Heart left ventricle (tissue), 16 donors: ENCODE measurements at regions of chr18 and their contacts with region 1.

Region 1: DNA sequence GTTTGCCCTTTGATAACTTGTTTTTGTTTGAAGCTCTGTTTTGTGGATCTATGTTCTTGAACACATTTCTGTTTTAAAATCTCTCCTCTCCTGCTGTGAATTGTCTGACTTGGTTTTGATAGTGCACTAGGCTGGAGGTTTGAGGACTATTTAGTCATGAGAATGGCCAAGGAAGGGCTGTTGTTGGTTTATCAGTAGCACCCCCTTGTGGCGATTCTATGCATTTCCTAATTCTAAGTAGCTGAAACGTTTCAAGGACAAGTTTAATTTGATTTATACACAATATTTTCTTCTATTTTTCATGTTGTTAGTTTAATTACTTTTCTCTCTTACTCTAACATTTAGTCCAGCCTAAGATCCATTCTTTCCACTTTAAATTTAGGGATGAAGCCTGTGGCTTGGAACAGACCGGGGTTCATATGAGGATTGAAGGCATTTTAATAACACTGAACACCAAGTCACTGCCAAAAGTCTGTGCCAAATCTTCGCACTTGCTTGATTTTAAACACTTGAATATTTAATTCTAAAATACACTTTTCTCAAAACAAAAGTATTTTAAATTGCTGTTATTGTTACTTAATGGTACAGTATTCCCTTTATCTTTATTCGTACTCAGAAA is 166.0 kb downstream of the SOCS6 start:
- DNase-seq: peak in 1 of 5 donors; percentile 16
- ATAC-seq: peak in 1 of 4 donors; percentile 44
- H3K4me3 ChIP-seq: no peak overlapping the region
- H3K27ac ChIP-seq: no peak overlapping the region
- H3K4me1 ChIP-seq: peaks cover 0 to 4% (median 0%) of the 10 kb centered on the region in 12 donors
- H3K27me3 ChIP-seq: peaks cover 0 to 6% (median 0%) of the 10 kb centered on the region in 9 donors
- CTCF ChIP-seq: peak; percentile 67 to 89 (median 78)
- POLR2A ChIP-seq: no peak

Region 2: DNA sequence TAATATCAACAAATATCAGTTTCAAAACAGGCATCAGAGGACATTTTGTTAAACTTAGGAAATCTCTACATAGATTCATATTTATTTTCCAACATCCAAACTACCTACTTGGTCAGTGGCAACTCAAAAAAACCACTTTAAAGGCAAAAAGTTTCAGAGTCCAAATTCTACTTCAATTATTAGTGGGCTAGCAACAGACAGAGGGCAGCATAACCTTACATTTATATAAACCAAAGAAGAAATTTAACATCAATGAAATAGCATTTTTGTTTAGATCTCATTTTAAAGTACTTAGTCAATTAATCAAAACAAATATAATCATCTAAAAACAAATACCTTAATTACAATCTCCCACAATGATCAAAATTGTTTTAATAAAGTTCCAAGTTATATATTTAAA is 282.6 kb before region 1 on chr18:
- intact Hi-C with region 1: loop called in 1 of 10 experiments (anchors 5 kb)
- DNase-seq: no peak
- ATAC-seq: no peak
- H3K4me3 ChIP-seq: no peak overlapping the region
- H3K27ac ChIP-seq: no peak overlapping the region
- H3K4me1 ChIP-seq: no peaks in the 10 kb centered on the region
- H3K27me3 ChIP-seq: no peaks in the 10 kb centered on the region
- CTCF ChIP-seq: peak in 7 of 12 donors; percentile 8 to 42 (median 34)
- POLR2A ChIP-seq: no peak